Activated naive CD4-positive, alpha-beta T cell treated with anti-CD3 and anti-CD28 coated beads, Interleukin-2, amount 10 ng/mL, durations not matched to agents 7 days and 5 days (primary cell): ENCODE measurements at regions of chr7 and their contacts with region 1.

Region 1: GRCh38 chr7:130982160-130982638 is 248.2 kb upstream of the KLF14 start:
- DNase-seq: peak; percentile 41
- H3K4me3 Mint-ChIP-seq: no peak overlapping the region
- H3K27ac Mint-ChIP-seq: no peak overlapping the region
- H3K4me1 Mint-ChIP-seq: peaks cover 36% of the 10 kb centered on the region
- H3K27me3 Mint-ChIP-seq: no peaks in the 10 kb centered on the region

Region 2: DNA sequence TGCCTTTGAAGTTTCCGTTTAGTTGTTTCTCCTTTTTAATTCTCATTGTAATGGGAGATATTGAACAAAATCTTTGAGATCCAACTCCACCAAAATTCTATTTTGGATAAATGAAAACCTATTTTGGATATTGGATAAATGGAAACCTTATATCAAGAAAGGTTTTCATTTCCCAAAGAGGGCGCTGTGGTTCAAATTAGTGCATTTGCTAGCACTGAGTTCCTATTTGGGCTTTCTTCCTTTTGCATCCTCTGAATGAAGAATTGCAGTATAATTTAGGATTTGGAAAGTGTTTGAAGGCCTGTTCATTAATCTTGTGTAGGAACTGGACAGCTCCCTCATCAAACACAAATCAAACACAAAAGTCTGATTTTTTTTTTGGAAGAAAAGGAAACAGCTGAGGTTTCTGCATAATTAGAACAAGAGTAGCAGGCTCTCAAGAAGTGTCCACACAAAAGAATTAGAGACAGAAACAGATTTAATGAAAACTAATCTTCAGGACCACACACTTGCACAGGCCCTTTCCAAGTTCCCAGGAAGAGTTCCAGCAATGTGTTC is 167.3 kb before region 1 on chr7:
- CTCF ChIA-PET with region 1: no interaction called
- DNase-seq: no peak
- H3K4me3 Mint-ChIP-seq: no peak overlapping the region
- H3K27ac Mint-ChIP-seq: no peak overlapping the region
- H3K4me1 Mint-ChIP-seq: no peaks in the 10 kb centered on the region
- H3K27me3 Mint-ChIP-seq: peaks cover 8% of the 10 kb centered on the region

Region 3: DNA sequence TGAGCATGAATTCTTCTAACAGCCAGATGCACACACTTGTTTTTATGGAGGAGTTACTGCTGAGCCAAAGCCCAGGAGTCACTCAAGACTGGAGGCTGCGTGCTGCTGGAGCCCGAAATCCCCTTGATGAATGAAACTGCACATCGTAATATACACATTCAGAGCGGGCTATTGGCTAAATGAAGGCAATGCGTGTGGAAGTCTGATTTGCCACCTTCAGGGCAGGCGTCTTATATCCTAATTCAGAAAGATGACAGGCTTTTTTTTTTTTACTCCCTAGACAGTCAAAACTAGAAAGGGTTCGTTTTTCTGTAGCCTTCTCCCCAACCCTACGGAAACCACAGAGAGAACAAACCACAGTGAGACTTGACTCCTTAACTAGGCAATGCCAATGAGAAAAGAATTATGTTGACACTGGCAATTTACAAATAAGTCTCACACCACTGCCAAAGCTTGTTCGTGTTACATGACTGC is 21.0 kb before region 1 on chr7:
- CTCF ChIA-PET with region 1: interaction called, 27 read pairs
- DNase-seq: peak; percentile 87
- H3K4me3 Mint-ChIP-seq: peak overlapping the region; percentile 90
- H3K27ac Mint-ChIP-seq: peak overlapping the region; percentile 99
- H3K4me1 Mint-ChIP-seq: peaks cover 49% of the 10 kb centered on the region
- H3K27me3 Mint-ChIP-seq: no peaks in the 10 kb centered on the region

Region 4: DNA sequence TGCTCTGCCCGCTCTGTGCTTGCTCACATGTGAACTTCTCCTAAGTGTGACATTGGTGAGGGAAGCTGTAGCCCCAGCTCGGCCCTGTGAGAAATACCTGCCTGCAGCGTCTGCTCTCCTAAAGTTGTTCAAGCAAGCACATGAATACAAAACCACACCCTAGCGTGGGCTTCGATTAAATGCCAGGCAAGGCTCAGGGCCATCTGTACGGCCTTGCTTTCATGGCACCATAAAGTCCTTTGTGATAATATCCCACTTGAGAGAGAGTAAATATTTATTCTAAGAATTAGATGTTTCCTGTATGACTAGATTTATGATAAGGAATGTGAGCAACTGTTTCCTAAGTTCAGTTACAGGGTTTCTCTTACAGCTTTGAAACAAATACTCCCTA is 14.6 kb after region 1 on chr7:
- CTCF ChIA-PET with region 1: interaction called, 29 read pairs
- DNase-seq: no peak
- H3K4me3 Mint-ChIP-seq: peak overlapping the region; percentile 16
- H3K27ac Mint-ChIP-seq: peak overlapping the region; percentile 72
- H3K4me1 Mint-ChIP-seq: peaks cover 61% of the 10 kb centered on the region
- H3K27me3 Mint-ChIP-seq: no peaks in the 10 kb centered on the region

Region 5: DNA sequence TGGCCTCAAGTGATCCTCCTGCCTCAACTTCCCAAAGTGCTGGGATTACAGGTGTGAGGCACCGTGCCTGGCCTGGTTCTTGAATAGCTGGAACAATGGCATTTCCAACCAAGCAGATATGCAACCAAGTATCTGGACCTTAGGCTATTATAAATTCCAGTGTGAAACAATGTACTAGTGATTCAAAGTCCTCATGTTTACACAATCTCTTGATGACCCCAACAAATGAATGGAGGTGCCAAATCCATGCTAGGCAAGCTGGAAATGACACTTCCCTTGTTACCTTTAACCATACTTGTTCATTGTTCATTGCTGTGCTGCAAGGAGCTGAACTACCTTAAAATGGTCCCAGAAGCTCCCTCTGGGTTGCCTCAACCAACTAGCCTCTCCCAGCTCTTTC is 34.0 kb after region 1 on chr7:
- CTCF ChIA-PET with region 1: interaction called, 11 read pairs
- DNase-seq: no peak
- H3K4me3 Mint-ChIP-seq: no peak overlapping the region
- H3K27ac Mint-ChIP-seq: no peak overlapping the region
- H3K4me1 Mint-ChIP-seq: peaks cover 58% of the 10 kb centered on the region
- H3K27me3 Mint-ChIP-seq: no peaks in the 10 kb centered on the region

Region 6: DNA sequence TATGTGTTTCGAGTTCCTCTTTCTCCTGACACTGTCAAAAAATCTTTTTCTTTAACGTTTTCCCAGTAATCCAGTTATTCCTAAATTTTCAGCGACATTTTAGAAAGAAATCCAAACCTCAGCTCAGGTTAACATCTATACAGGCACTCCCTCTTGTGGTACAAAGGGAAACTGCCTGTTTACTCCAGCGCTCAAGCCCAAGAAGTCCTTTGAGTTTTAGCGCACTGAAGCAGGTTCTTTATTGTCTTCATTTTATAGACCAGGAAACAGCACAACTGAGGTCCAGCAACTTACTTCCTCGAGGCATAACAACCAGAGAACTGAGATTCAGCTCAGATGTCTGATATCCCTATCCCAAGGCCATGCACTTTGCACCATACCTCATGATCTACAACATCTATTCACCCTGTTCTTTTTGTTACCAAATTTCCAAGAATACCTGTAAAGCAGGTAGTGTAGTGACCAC is 58.3 kb after region 1 on chr7:
- CTCF ChIA-PET with region 1: interaction called, 48 read pairs
- DNase-seq: peak; percentile 68
- H3K4me3 Mint-ChIP-seq: no peak overlapping the region
- H3K27ac Mint-ChIP-seq: peak overlapping the region; percentile 47
- H3K4me1 Mint-ChIP-seq: peaks cover 62% of the 10 kb centered on the region
- H3K27me3 Mint-ChIP-seq: no peaks in the 10 kb centered on the region

Region 7: DNA sequence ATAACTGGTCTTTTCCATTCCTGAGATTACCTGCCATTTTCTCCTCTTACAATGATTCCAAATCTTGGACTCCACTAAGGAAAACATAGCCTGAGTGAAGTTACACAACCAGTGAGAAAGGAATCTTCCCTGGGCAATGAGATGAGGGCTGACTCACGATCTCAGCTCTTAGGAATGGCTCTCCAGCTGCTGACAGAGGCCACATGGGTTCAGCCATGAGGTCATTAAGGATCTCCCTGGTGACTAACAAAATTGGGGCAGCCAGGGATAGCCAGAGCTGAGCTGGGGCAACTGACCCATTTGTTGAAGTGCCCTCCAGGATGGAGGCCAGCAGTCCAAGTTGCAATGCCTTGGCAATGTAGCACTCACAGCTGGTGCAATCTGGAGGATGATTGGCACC is 266.8 kb after region 1 on chr7:
- CTCF ChIA-PET with region 1: no interaction called
- DNase-seq: no peak
- H3K4me3 Mint-ChIP-seq: no peak overlapping the region
- H3K27ac Mint-ChIP-seq: no peak overlapping the region
- H3K4me1 Mint-ChIP-seq: peaks cover under 1% of the 10 kb centered on the region
- H3K27me3 Mint-ChIP-seq: peaks cover 24% of the 10 kb centered on the region